B cell (primary cell): ENCODE measurements at regions of chr1 and their contacts with region 1.

Region 1: GRCh38 chr1:82472489-82473131 is 671.9 kb downstream of the ADGRL2 start:
- DNase-seq: no peak
- ATAC-seq: no peak
- H3K4me3 ChIP-seq: no peak overlapping the region
- H3K4me3 Mint-ChIP-seq: no peak overlapping the region
- H3K27ac ChIP-seq: no peak overlapping the region
- H3K27ac Mint-ChIP-seq: no peak overlapping the region
- H3K4me1 ChIP-seq: no peaks in the 10 kb centered on the region
- H3K4me1 Mint-ChIP-seq: peaks cover 4% of the 10 kb centered on the region
- H3K27me3 ChIP-seq: no peaks in the 10 kb centered on the region
- H3K27me3 Mint-ChIP-seq: no peaks in the 10 kb centered on the region
- CTCF ChIP-seq: no peak

Region 2: DNA sequence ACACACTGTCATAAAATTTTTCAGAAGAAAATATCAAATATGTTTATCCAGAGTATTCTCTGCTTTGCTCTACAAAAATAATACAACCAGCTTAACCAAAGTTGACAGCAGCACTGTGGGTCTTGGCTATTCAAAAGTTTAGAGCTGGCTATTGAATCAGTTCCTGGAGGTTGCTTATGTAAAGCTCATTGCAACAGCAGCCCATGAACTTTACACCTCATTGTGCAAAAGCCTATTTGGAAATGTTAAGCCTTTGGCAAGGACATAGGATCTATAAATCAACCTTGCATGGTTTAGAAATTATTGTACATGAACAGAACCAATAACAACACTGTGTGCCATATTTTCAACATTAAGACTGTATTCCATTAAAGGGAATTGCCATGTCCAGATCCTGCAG is 43.0 kb after region 1 on chr1:
- CTCF ChIA-PET with region 1: no interaction called
- POLR2A ChIA-PET with region 1: no interaction called
- intact Hi-C with region 1: loop called (anchors 2 kb)
- DNase-seq: no peak
- ATAC-seq: no peak
- H3K4me3 ChIP-seq: no peak overlapping the region
- H3K4me3 Mint-ChIP-seq: no peak overlapping the region
- H3K27ac ChIP-seq: no peak overlapping the region
- H3K27ac Mint-ChIP-seq: no peak overlapping the region
- H3K4me1 ChIP-seq: no peaks in the 10 kb centered on the region
- H3K4me1 Mint-ChIP-seq: no peaks in the 10 kb centered on the region
- H3K27me3 ChIP-seq: no peaks in the 10 kb centered on the region
- H3K27me3 Mint-ChIP-seq: no peaks in the 10 kb centered on the region
- CTCF ChIP-seq: no peak